ENCODE measurements at regions of chr2 and their contacts with region 1.

Region 1: GRCh38 chr2:99180755-99181623 is at the starts of genes MITD1 and MRPL30:
- DNase-seq: peak; percentile 94
- H3K4me3 ChIP-seq: peak within 1 kb of the TSS; percentile 87
- H3K4me3 Mint-ChIP-seq: peak within 1 kb of the TSS; percentile 92
- H3K27ac Mint-ChIP-seq: peak within 1 kb of the TSS; percentile 84
- H3K4me1 ChIP-seq: peaks cover 28% of the 10 kb centered on the region
- H3K4me1 Mint-ChIP-seq: peaks cover 9% of the 10 kb centered on the region
- H3K27me3 ChIP-seq: no peaks in the 10 kb centered on the region
- H3K27me3 Mint-ChIP-seq: no peaks in the 10 kb centered on the region
- CTCF ChIP-seq: no peak
- total RNA-seq, gene MITD1: 29.3 and 30.5 TPM in 2 replicates
- total RNA-seq, gene MRPL30: 49.9 and 51.2 TPM in 2 replicates

Region 2: DNA sequence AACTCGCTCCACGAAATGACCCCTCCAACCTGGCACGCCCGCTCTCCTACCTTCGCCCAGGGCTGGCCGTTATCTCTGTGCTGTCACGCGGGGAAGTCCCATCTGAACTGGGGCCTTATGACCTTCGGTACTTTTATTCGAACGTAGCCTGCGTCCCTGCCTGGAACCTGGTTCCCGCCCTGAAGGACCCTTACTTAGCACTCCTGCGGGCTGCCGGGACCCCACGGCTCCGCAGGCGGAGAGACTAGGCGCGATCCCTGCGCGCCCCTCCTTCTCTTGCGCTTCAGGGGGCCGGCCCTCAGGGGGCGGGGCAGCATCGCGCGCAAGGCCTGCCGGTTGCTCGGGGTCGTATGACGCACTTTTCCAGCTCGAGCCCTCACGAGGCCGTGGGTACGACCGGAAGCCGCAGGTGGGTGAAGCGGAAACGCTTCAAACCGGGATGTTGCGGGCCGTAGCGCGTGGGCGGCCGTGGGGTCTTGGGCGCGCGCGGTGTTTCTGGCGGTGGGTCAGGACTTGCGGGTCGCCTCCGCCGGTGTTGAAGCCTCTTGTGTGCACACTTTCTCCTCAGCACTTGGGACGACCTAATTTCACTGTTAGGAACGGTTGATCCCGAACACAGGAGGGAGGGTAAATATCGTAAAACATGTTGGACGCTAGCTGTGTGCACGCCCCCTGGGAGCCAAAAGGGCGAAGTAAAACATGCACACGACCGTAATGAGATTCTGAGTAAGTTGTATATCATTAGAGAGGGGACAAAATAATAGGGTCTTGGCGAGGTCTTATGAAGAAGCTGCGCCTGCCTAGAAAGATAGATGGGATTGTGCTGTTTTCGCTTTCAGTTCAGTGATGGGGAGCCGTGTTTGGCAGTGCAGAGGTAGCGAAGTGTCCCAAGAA is 26.1 kb before region 1 on chr2 and contains the starts of genes LIPT1 and TSGA10:
- CTCF ChIA-PET with region 1: no interaction called
- POLR2A ChIA-PET with region 1: interaction called, 4 read pairs
- intact Hi-C with region 1: loop called (anchors 1 kb)
- DNase-seq: peak; percentile 92 to 93
- H3K4me3 ChIP-seq: peak within 1 kb of the TSS; percentile 86
- H3K4me3 Mint-ChIP-seq: no peak within 1 kb of the TSS
- H3K27ac Mint-ChIP-seq: peak within 1 kb of the TSS; percentile 87
- H3K4me1 ChIP-seq: no peaks in the 10 kb centered on the region; the same call in 1 of the 2 replicates
- H3K4me1 Mint-ChIP-seq: peaks cover 7% of the 10 kb centered on the region
- H3K27me3 ChIP-seq: no peaks in the 10 kb centered on the region
- H3K27me3 Mint-ChIP-seq: no peaks in the 10 kb centered on the region
- CTCF ChIP-seq: peak in 1 of 2 experiments; percentile 34
- total RNA-seq, gene LIPT1: 9.4 and 10.2 TPM in 2 replicates
- total RNA-seq, gene TSGA10: 8.9 and 9.9 TPM in 2 replicates

Region 3: GRCh38 chr2:99198103-99199010 is 17.4 kb after region 1 on chr2:
- CTCF ChIA-PET with region 1: interaction called, 3 read pairs
- POLR2A ChIA-PET with region 1: no interaction called
- intact Hi-C with region 1: loop called (anchors 1 kb)
- DNase-seq: no peak
- H3K4me3 ChIP-seq: no peak overlapping the region
- H3K4me3 Mint-ChIP-seq: no peak overlapping the region
- H3K27ac Mint-ChIP-seq: no peak overlapping the region
- H3K4me1 ChIP-seq: peaks cover 4% of the 10 kb centered on the region; the same call in 1 of the 2 replicates
- H3K4me1 Mint-ChIP-seq: no peaks in the 10 kb centered on the region
- H3K27me3 ChIP-seq: no peaks in the 10 kb centered on the region
- H3K27me3 Mint-ChIP-seq: no peaks in the 10 kb centered on the region
- CTCF ChIP-seq: peak in 1 of 2 experiments; percentile 34